Activated B cell treated with CpG ODN at 0.5 μM for 24 hours (primary cell): ENCODE measurements at regions of chr17 and their contacts with region 1.

Region 1: DNA sequence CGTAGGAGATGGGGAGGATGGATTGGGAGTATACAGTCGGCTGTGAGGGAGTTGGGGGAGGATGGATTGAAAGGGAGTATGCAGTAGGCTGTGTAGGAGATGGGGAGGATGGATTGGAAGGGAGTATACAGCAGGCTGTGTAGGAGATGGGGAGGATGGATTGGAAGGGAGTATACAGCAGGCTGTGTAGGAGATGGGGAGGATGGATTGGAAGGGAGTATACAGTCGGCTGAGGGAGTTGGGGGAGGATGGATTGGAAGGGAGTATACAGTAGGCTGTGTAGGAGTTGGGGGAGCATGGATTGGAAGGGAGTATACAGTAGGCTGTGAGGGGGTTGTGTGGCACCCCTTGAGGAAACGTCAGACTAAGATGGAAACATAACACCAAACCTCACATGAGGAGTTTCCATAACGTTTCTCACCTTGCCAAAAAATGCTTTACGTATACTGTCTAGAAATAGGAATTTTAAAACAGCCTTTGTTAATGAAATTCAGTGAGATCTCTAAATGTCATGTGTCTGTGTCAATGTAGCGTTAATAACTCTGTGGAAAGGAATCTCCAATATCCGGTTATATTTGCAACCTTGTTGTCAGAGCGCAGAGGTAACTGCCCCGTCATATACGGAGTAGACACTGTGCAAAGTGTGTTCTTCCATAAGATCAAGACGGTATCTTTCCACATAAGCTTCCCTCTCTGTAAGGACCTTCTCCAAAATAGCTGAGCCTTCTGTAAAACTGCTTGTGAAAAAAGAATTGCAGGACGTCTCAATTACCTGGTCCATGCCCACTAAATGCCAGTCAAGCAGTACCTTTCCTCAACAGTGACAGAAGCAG is 6.3 kb upstream of the VPS53 start:
- DNase-seq: no peak
- ATAC-seq: no peak
- H3K4me3 Mint-ChIP-seq: no peak overlapping the region
- H3K27ac Mint-ChIP-seq: no peak overlapping the region
- H3K4me1 Mint-ChIP-seq: peaks cover 3% of the 10 kb centered on the region
- H3K27me3 Mint-ChIP-seq: no peaks in the 10 kb centered on the region
- CTCF ChIP-seq: no peak

Region 2: GRCh38 chr17:740240-741017 is 19.5 kb after region 1 on chr17:
- CTCF ChIA-PET with region 1: no interaction called
- POLR2A ChIA-PET with region 1: interaction called, 22 read pairs
- intact Hi-C with region 1: no loop called
- DNase-seq: peak; percentile 66
- ATAC-seq: peak; percentile 95
- H3K4me3 Mint-ChIP-seq: peak overlapping the region; percentile 76
- H3K27ac Mint-ChIP-seq: peak overlapping the region; percentile 94
- H3K4me1 Mint-ChIP-seq: peaks cover 25% of the 10 kb centered on the region
- H3K27me3 Mint-ChIP-seq: no peaks in the 10 kb centered on the region
- CTCF ChIP-seq: no peak

Region 3: DNA sequence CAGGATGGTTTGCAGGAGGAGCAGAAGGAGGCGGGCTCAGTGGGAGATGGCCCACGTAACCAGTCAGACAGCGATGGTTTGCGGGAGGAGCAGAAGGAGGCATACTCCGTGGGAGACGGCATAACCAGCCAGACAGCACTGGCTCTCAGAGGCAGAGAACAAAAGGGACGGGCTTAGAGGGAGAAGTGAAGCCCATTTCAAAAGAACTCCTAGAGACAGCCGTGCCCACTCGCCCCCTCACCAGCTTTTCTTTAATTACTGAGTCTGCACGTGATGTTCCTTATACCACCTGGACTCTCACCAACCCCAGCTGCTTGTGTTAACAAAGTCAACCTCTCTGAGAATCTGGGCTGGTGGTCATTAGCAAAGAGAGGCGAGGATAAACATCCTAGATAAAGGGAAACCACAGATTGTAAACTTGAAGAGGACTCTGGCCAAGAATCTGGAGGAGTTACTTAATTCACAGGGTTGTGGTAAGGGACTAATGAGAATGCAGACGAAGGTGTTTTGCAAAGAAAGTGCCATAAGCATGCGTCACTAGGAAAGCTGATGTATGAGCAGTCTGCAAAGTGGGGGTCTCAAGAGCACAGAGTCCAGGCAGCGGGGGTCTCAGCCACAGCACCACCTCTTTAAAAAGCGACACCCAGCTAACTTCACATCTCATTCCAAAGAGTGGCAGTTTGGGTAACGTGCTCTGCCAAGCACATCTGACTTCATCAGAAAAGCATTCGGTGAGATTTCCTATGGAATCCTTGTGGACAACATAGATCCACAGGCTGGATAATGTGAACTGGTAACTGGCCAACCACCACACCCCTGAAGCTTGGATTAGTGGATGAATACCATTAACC is 206.9 kb after region 1 on chr17:
- CTCF ChIA-PET with region 1: no interaction called
- POLR2A ChIA-PET with region 1: no interaction called
- intact Hi-C with region 1: no loop called
- DNase-seq: no peak
- ATAC-seq: no peak
- H3K4me3 Mint-ChIP-seq: no peak overlapping the region
- H3K27ac Mint-ChIP-seq: no peak overlapping the region
- H3K4me1 Mint-ChIP-seq: no peaks in the 10 kb centered on the region
- H3K27me3 Mint-ChIP-seq: peaks cover 13% of the 10 kb centered on the region
- CTCF ChIP-seq: no peak